Natural killer cell (primary cell): ENCODE measurements at regions of chr6 and their contacts with region 1.

Region 1: GRCh38 chr6:16514249-16514648 is 247.0 kb downstream of the ATXN1 start:
- DNase-seq: peak in 1 of 2 donors; percentile 69
- ATAC-seq: peak; percentile 62 to 73 (median 68)
- H3K4me3 ChIP-seq: no peak overlapping the region
- H3K4me3 Mint-ChIP-seq: no peak overlapping the region
- H3K27ac ChIP-seq: no peak overlapping the region
- H3K27ac Mint-ChIP-seq: peak overlapping the region in 1 of 2 donors; percentile 62
- H3K4me1 ChIP-seq: peaks cover 24% of the 10 kb centered on the region
- H3K4me1 Mint-ChIP-seq: peaks cover 48 to 67% of the 10 kb centered on the region in 2 donors
- H3K27me3 ChIP-seq: no peaks in the 10 kb centered on the region
- H3K27me3 Mint-ChIP-seq: no peaks in the 10 kb centered on the region
- CTCF ChIP-seq: peak; percentile 50

Region 2: GRCh38 chr6:16964553-16965501 is 450.6 kb after region 1 on chr6:
- intact Hi-C with region 1: loop called (anchors 10 kb)
- DNase-seq: peak; percentile 58 to 78
- ATAC-seq: peak; percentile 86 to 99 (median 95)
- H3K4me3 ChIP-seq: no peak overlapping the region
- H3K4me3 Mint-ChIP-seq: no peak overlapping the region
- H3K27ac ChIP-seq: no peak overlapping the region
- H3K27ac Mint-ChIP-seq: no peak overlapping the region
- H3K4me1 ChIP-seq: peaks cover 3% of the 10 kb centered on the region
- H3K4me1 Mint-ChIP-seq: peaks cover 5 to 7% of the 10 kb centered on the region in 2 donors
- H3K27me3 ChIP-seq: no peaks in the 10 kb centered on the region
- H3K27me3 Mint-ChIP-seq: peaks cover 13 to 18% of the 10 kb centered on the region in 2 donors
- CTCF ChIP-seq: peak; percentile 74

Region 3: GRCh38 chr6:17086469-17086868 is 572.2 kb after region 1 on chr6:
- intact Hi-C with region 1: loop called (anchors 5 kb)
- DNase-seq: peak in 1 of 2 donors; percentile 37
- ATAC-seq: peak in 2 of 3 donors; percentile 39 to 47
- H3K4me3 ChIP-seq: no peak overlapping the region
- H3K4me3 Mint-ChIP-seq: no peak overlapping the region
- H3K27ac ChIP-seq: no peak overlapping the region
- H3K27ac Mint-ChIP-seq: no peak overlapping the region
- H3K4me1 ChIP-seq: no peaks in the 10 kb centered on the region
- H3K4me1 Mint-ChIP-seq: no peaks in the 10 kb centered on the region
- H3K27me3 ChIP-seq: no peaks in the 10 kb centered on the region
- H3K27me3 Mint-ChIP-seq: peaks cover 13 to 42% of the 10 kb centered on the region in 2 donors
- CTCF ChIP-seq: peak; percentile 56